ENCODE measurements at regions of chr9 and their contacts with region 1.

Region 1: GRCh38 chr9:20622330-20623020 is at the start of gene MLLT3:
- DNase-seq: peak; percentile 89 to 98 (median 97)

Region 2: GRCh38 chr9:20356403-20357035 is 266.0 kb before region 1 on chr9:
- intact Hi-C with region 1: loop called (anchors 5 kb)
- DNase-seq: peak; percentile 55 to 92 (median 77)

Region 3: GRCh38 chr9:20683351-20684034 is 61.0 kb after region 1 on chr9:
- intact Hi-C with region 1: loop called (anchors 2 kb)
- DNase-seq: peak; percentile 18 to 75 (median 44)

Region 4: GRCh38 chr9:20740929-20741582 is 118.6 kb after region 1 on chr9:
- intact Hi-C with region 1: no loop called
- DNase-seq: no peak

Region 5: GRCh38 chr9:20872340-20872977 is 250.0 kb after region 1 on chr9:
- intact Hi-C with region 1: no loop called
- DNase-seq: no peak

Region 6: GRCh38 chr9:20941174-20941690 is 318.8 kb after region 1 on chr9:
- intact Hi-C with region 1: loop called (anchors 5 kb)
- DNase-seq: peak in 39 of 42 donors; percentile 7 to 84 (median 50)

Measured in head of caudate nucleus (tissue), 42 donors.